ENCODE measurements at regions of chr20 and their contacts with region 1.

Region 1: DNA sequence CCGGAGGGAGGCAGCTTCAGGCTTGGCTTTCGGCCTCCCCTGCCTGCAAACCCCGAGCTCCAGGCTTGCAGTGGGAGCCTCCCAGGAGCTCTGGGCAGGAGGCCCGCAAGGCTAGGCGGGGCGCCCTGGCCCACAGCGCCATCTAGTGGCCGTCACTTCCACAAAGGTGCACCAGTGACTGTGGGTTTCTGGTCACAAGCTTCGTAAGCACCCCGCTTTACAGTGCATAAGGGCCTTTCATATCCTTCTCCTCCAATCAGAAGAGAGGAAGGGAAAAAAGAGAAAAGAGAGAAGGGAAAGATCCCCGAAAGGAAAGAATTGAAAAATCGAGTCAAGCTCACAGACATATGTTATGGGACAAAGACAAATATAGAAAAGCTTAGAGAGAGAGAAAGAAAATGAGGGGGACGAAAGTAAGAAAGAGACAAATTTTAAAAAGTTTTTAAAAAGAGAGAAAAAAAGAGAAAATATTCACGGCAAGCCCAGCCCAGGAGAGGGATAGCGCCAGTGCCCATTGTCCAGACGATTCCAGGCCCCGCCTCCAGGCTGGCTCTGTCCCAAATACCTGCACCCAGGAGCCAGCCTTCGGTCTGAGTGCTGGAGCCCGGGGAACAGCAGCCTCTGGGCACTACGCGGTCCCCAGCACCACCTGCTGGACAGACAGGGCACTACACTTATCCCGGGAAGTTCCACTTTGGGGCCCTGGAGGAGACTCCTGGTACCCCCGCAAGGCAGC is 207.1 kb downstream of the PREX1 start:
- H3K4me3 ChIP-seq: peak overlapping the region; percentile 31
- H3K27ac ChIP-seq: no peak overlapping the region
- H3K4me1 ChIP-seq: no peaks in the 10 kb centered on the region
- CTCF ChIP-seq: peak; percentile 89

Region 2: DNA sequence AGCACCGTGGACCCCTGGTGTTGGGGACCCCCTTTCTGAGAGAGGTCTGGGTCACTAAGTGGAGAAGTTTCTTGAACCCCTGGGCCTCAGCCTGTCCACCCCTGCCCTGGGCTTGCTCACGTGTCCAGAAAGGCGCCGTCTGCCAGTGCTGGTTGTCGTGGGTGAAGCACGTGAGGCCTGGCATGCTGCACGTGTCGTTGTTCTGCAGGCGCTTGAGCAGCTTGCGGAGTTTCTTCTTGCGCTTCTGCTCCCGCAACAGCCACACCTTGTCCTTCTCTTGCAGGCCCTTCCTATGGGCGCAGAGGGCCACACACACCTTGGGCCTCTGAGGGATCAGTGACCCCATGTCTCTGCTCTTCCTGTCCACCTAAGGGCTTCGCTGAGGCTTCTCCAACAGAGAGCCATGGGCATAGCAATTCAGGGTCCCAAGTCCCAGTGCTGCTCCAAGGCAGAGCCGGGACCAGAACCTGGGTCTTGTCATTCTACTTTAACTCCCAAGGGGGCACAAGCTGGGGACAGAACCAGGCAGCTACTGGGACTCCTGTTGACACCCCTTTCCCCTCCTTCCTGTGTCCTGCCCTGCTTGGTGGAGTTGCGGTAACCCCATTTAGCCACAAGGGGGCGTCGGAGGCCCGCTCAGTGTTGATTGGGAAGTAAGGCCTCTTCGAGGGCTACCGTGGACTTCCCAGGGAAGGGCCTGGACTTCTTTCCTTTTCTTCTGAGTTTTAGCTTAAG is 957.2 kb before region 1 on chr20:
- CTCF ChIA-PET with region 1: interaction called, 42 read pairs
- POLR2A ChIA-PET with region 1: interaction called, 3 read pairs
- H3K4me3 ChIP-seq: no peak overlapping the region
- H3K27ac ChIP-seq: no peak overlapping the region
- H3K4me1 ChIP-seq: no peaks in the 10 kb centered on the region
- CTCF ChIP-seq: peak; percentile 87

Region 3: GRCh38 chr20:47725248-47725973 is 895.3 kb before region 1 on chr20:
- CTCF ChIA-PET with region 1: interaction called, 20 read pairs
- POLR2A ChIA-PET with region 1: no interaction called
- H3K4me3 ChIP-seq: no peak overlapping the region
- H3K27ac ChIP-seq: no peak overlapping the region
- H3K4me1 ChIP-seq: peaks cover 7% of the 10 kb centered on the region
- CTCF ChIP-seq: peak; percentile 71

Region 4: GRCh38 chr20:47854163-47854562 is 766.5 kb before region 1 on chr20:
- CTCF ChIA-PET with region 1: interaction called, 10 read pairs
- POLR2A ChIA-PET with region 1: no interaction called
- H3K4me3 ChIP-seq: no peak overlapping the region
- H3K27ac ChIP-seq: no peak overlapping the region
- H3K4me1 ChIP-seq: no peaks in the 10 kb centered on the region; the same call in 1 of the 2 replicates
- CTCF ChIP-seq: no peak

Region 5: DNA sequence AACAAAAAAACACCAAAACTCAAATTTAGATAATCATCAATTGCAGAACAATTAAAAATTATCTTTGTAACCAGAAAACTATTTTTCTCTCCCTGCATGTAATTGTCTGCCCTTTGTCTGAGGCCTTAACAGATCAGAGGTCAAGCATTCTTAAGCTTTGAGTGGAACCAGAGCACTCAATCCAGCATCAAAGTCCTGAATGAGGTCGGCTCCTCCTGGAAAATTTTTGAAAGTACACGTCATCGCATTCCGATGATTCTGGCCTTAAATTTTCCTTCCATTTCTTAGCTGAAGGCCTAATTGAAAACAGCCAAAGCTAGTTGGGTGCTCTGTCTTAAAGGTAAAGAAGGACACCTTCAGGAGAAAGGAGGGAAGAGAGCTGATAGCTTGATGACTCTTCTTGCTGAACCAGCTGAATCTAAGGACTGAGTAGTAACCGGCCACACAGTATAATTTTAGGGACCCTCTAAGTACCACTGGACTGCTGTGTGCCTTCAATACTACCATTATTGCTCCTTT is 325.2 kb before region 1 on chr20:
- CTCF ChIA-PET with region 1: interaction called, 50 read pairs
- POLR2A ChIA-PET with region 1: interaction called, 7 read pairs
- H3K4me3 ChIP-seq: no peak overlapping the region
- H3K27ac ChIP-seq: no peak overlapping the region
- H3K4me1 ChIP-seq: peaks cover 10% of the 10 kb centered on the region
- CTCF ChIP-seq: 0 out of 2 replicates have a peak, but pooled peaks have one; percentile 12

Region 6: DNA sequence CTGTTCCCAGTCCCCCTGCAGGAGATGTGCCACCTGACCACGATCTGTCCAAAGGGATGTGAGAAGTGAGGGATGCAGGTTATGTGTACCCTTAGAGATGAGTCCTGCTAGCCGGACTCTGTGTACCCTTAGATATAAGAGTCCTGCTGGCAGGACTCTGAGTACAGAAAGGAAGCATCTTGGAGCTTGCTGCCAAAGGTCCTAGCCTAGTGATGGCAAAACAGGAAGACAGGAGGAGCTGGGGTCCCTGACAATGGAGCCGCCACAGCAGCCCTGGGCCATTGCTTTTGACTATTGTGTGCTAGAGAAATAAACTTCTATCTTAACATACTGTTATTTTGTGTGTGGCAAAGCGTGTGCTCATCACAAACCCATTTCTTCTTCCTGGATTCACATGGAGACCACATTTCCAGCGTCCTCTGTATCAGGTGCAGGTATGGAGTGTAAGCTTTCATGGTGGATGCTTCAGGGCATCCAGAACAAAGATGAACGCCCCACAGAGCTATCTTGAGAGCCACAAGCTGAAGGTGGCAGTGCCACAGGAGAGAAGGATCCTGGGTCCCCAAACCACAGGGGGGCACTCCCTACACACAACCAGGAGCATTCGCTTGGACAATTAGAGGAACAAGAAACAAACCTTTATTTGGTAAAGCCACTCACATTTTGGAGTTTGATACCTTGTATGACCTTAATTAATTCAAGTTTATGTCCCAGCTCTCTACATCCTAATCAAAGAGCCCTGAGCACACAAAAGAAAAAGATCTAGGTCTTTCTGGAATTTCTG is 199.3 kb before region 1 on chr20:
- CTCF ChIA-PET with region 1: interaction called, 18 read pairs
- POLR2A ChIA-PET with region 1: no interaction called
- H3K4me3 ChIP-seq: no peak overlapping the region
- H3K27ac ChIP-seq: no peak overlapping the region
- H3K4me1 ChIP-seq: no peaks in the 10 kb centered on the region
- CTCF ChIP-seq: no peak

Region 7: GRCh38 chr20:48538420-48539203 is 82.1 kb before region 1 on chr20:
- CTCF ChIA-PET with region 1: interaction called, 12 read pairs
- POLR2A ChIA-PET with region 1: no interaction called
- H3K4me3 ChIP-seq: no peak overlapping the region
- H3K27ac ChIP-seq: no peak overlapping the region
- H3K4me1 ChIP-seq: no peaks in the 10 kb centered on the region
- CTCF ChIP-seq: no peak

Region 8: GRCh38 chr20:48657475-48658470 is 37.1 kb after region 1 on chr20:
- CTCF ChIA-PET with region 1: no interaction called
- POLR2A ChIA-PET with region 1: no interaction called
- H3K4me3 ChIP-seq: no peak overlapping the region
- H3K27ac ChIP-seq: no peak overlapping the region
- H3K4me1 ChIP-seq: no peaks in the 10 kb centered on the region
- CTCF ChIP-seq: peak; percentile 89

Measured in HEK293 (cell line).